Gastrocnemius medialis (tissue), 4 donors: ENCODE measurements at regions of chr3 and their contacts with region 1.

Region 1: GRCh38 chr3:196684548-196685407 is 27.3 kb downstream of the CEP19 start:
- DNase-seq: peak; percentile 16 to 36
- ATAC-seq: peak; percentile 55 to 85
- H3K4me3 ChIP-seq: peak overlapping the region in 2 of 4 donors; percentile 22 to 27
- H3K27ac ChIP-seq: no peak overlapping the region
- H3K4me1 ChIP-seq: peaks cover 0 to 6% of the 10 kb centered on the region in 2 donors
- H3K27me3 ChIP-seq: no peaks in the 10 kb centered on the region
- CTCF ChIP-seq: peak; percentile 81 to 91 (median 85)
- POLR2A ChIP-seq: no peak

Region 2: DNA sequence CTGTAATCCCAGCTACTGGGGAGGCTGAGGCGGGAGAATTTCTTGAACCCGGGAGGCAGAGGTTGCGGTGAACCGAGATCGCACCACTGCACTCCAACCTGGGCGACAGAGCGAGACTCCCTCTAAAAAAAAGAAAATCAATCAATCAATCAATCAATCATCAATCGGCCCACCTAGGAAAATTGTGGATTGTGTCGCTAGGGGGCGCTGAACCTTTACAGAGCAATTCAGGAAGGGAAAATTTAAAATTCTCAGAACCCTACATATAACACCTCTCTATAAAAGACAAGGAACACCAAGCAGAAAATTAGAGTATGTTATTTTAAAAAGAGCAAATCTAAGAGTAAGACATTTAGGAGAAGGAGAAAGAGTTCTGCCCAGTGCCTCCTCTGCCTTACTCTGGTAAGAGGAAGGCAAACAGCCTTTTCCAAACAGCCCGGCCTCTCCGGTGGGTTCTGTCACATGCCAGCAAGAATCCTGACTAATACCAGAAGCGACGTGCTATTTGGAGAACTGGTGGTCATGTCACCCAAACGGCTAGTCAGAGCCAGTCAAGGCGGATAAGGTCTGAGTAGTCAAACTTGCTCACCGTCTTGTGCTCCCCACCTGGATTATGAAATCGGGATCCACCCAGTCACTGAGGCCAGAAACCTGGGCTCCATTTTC is 147.3 kb before region 1 on chr3:
- in situ Hi-C with region 1: loop called in 3 of 4 experiments (anchors 10 kb)
- intact Hi-C with region 1: loop called (anchors 2 kb)
- DNase-seq: no peak
- ATAC-seq: no peak
- H3K4me3 ChIP-seq: no peak overlapping the region
- H3K27ac ChIP-seq: no peak overlapping the region
- H3K4me1 ChIP-seq: peaks cover 3 to 5% of the 10 kb centered on the region in 2 donors
- H3K27me3 ChIP-seq: no peaks in the 10 kb centered on the region
- CTCF ChIP-seq: peak; percentile 51 to 84 (median 62)
- POLR2A ChIP-seq: no peak

Region 3: DNA sequence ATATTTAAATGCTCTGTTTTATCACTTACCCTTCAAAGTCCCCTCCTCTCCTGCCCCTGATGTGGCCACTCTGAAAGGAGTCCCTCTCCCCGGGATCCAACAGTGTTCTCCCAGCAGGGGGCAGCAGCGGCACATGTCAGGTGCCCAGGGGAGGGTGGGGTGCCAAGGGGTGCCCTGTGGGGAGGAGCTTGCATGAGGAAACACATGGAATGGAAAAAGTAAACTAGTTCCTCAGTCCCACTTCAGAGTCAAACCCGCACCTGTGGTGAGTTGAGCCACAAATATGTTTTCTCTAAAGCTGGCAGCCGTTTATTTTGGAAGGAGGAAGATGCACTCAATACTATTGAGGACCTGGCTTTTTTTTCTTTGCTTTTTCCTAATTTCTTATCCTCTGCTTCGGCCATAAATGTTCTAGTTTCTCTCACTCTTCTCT is 75.4 kb before region 1 on chr3:
- in situ Hi-C with region 1: loop called in 3 of 4 experiments (anchors 5 to 10 kb)
- intact Hi-C with region 1: loop called (anchors 1 kb)
- DNase-seq: peak; percentile 56 to 71
- ATAC-seq: peak; percentile 60 to 78
- H3K4me3 ChIP-seq: no peak overlapping the region
- H3K27ac ChIP-seq: no peak overlapping the region
- H3K4me1 ChIP-seq: peaks cover 0 to 17% of the 10 kb centered on the region in 2 donors
- H3K27me3 ChIP-seq: no peaks in the 10 kb centered on the region
- CTCF ChIP-seq: peak; percentile 45 to 79 (median 76)
- POLR2A ChIP-seq: no peak

Region 4: DNA sequence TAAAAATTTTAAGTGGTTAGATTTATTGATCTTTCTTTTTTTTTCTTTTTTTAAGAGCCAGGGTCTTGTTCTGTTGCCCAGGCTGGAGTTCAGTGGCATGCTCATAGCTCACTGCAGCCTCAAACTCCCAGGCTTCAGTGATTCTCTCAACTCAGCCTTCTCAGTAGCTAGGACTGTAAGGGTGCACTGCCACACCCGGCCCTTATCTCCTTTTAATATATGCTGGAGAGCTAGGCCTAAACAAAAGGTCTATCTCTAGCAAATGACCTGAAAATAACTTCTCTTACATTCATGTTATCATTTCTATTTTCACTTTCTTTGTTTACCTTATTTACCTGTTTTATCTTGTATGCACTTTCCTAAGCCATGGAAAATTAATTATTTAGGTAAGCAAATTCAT is 380.0 kb after region 1 on chr3:
- in situ Hi-C with region 1: no loop called
- intact Hi-C with region 1: no loop called
- DNase-seq: no peak
- ATAC-seq: no peak
- H3K4me3 ChIP-seq: no peak overlapping the region
- H3K27ac ChIP-seq: no peak overlapping the region
- H3K4me1 ChIP-seq: no peaks in the 10 kb centered on the region
- H3K27me3 ChIP-seq: no peaks in the 10 kb centered on the region
- CTCF ChIP-seq: no peak
- POLR2A ChIP-seq: no peak